ENCODE measurements at regions of chr9 and their contacts with region 1.

Region 1: GRCh38 chr9:136118320-136119060 is at the start of gene TMEM250:
- DNase-seq: peak; percentile 96
- H3K4me3 ChIP-seq: peak within 1 kb of the TSS; percentile 68 to 86 (median 84)
- H3K27ac ChIP-seq: peak within 1 kb of the TSS; percentile 73
- H3K4me1 ChIP-seq: peaks cover 28% of the 10 kb centered on the region
- H3K27me3 ChIP-seq: no peaks in the 10 kb centered on the region
- CTCF ChIP-seq: no peak
- total RNA-seq, gene TMEM250: 33.8 to 49.8 TPM

Region 2: DNA sequence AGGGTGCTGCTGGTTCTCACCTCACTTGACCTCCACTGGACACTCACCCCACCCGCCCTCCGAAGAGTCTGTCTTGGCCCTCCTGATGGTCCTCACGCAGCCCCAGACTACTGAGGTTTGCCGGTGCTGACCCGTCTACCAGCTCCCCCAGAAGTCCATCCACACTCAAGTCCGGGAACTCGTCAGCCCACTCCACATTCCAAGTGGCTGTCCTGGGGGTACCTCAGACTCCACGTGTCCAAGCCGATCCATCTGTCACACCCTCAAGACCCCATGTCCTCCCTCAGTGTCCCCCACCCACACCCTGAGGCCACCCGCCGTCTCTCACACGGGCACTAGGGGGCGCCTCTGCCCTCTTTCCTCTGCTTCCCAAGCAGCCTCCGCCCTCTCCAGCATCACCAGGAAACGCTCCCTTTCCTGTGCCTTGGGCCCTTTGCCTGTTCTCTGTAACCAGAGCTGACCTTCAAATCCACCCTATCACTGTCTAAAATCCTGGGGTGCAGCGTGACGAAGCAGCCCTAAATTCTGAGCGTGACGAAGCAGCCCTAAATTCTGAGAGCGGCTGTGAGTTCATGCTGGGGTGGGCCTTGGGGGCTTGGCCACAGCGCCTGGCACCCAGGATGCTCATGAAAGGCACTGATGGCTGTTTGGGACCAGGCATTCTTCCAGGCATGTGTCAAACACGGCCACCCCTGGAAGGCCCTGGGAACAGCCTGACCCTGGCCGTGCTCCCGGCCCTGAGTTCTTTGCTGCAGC is 320.8 kb before region 1 on chr9:
- CTCF ChIA-PET with region 1: no interaction called
- dilution Hi-C with region 1: no loop called
- in situ Hi-C with region 1: no loop called
- intact Hi-C with region 1: loop called (anchors 2 kb)
- DNase-seq: peak; percentile 29
- H3K4me3 ChIP-seq: no peak overlapping the region
- H3K27ac ChIP-seq: no peak overlapping the region
- H3K4me1 ChIP-seq: no peaks in the 10 kb centered on the region
- H3K27me3 ChIP-seq: no peaks in the 10 kb centered on the region
- CTCF ChIP-seq: peak; percentile 54 to 67

Region 3: DNA sequence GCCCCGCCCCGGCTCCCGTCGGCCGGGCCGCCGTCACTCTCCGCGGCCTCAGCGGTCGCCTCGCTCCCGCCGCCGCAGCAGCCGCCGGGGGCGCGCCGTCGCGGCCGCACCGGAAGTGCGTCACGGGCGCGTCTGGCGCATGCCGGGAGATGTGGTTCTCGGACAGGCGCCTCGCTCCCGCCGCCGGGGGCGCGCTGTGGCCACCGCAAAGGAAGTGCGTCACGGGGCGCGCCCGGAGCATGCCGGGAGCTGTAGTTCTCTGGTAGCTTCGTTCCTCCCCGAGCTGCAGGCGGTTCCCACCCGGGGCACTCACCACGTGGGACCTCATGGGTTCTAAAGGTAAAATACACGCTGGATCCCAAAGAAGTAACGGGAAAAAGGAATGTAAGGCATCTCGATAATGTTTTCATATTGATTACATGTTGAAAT is 157.2 kb before region 1 on chr9 and contains the start of gene UBAC1:
- CTCF ChIA-PET with region 1: no interaction called
- dilution Hi-C with region 1: no loop called
- in situ Hi-C with region 1: loop called (anchors 5 to 10 kb)
- intact Hi-C with region 1: no loop called
- DNase-seq: peak; percentile 91
- H3K4me3 ChIP-seq: peak within 1 kb of the TSS; percentile 60 to 92 (median 68)
- H3K27ac ChIP-seq: peak within 1 kb of the TSS; percentile 37
- H3K4me1 ChIP-seq: peaks cover 13% of the 10 kb centered on the region
- H3K27me3 ChIP-seq: no peaks in the 10 kb centered on the region
- CTCF ChIP-seq: peak in 1 of 2 donors; percentile 48
- total RNA-seq, gene UBAC1: 39.2 to 43.4 TPM

Region 4: DNA sequence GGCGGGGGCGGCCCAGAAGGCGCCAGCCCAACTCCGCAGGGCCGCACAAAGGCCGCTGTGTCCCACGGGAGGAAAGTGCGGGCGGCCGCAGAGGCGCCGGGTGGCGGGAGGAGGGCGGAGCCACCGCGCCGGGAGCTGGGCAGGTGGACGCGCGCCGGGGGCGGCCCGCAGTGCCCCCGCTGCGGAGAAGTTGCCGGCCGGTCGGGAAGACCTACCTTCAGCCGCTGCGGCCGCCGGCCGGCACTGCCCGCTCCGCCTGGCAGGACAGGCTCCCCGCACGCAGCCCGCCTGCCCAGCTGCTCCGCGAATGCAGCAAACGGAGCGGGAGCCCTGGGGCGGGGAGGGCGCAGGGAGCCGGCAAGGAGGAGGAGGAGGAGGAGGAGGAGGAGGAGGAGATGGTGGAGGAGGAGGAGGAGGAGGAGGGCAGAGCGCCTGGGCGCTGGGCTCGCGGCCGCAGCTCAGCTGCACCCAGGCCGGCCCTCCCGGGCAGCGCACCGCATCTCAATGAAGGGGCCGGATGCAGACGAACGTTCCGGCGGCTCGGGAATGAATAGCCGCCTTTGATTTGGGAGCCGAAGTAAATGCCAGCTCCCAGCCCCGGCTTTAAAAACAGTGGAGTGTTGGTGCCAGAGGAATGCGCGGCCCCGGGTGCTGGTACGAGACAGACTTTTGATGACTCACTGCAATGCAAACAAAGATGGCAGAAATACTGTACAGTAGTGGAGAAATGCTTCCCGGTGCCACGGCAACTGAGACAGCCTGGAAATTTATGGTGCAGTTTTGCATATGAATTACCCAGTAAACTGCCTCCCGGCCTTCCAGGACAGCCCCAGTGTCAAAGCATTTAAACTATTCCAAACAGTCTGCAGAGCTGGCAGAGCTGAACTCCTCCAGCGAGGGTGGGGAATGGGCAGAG is 66.7 kb before region 1 on chr9:
- CTCF ChIA-PET with region 1: no interaction called
- dilution Hi-C with region 1: loop called (anchors 5 kb)
- in situ Hi-C with region 1: no loop called
- intact Hi-C with region 1: loop called (anchors 2 kb)
- DNase-seq: peak; percentile 96
- H3K4me3 ChIP-seq: peak overlapping the region; percentile 29 to 63 (median 48)
- H3K27ac ChIP-seq: peak overlapping the region; percentile 47
- H3K4me1 ChIP-seq: peaks cover 44% of the 10 kb centered on the region
- H3K27me3 ChIP-seq: no peaks in the 10 kb centered on the region
- CTCF ChIP-seq: no peak

Region 5: DNA sequence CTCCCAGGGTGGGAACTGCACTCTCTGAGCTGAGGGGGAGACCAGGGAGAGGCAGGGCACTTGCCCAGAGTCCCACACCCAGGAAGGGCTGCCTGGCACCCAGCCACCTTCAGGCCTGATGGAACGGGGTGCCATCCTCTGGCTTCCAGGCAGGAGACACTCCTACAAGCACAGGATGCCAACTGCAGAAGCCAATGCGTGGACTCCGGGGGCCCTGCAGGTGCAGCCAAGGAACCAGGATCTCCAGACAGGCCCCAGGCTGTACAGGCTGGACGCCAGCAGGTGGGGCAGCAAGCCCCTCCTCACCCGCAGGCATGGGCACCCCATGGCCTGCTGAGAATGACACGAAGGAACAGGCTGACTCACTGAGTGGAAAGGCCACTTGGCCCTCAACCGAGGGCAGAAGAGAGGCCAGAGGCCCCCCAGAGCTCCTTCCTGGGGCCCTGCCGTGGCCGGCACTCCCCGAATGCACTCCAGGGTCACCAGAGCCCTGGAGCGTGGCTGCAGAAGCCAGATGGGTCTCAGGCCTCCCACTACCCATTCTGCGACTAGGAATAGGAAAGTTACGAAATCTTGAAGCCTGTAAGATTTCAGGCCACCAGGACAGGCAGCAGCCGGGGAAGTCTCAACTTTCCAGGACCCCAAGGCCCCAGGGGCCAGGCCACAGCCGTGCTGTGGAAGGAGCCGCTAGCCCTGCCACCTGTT is 39.1 kb before region 1 on chr9:
- CTCF ChIA-PET with region 1: no interaction called
- dilution Hi-C with region 1: no loop called
- in situ Hi-C with region 1: no loop called
- intact Hi-C with region 1: no loop called
- DNase-seq: no peak
- H3K4me3 ChIP-seq: no peak overlapping the region
- H3K27ac ChIP-seq: no peak overlapping the region
- H3K4me1 ChIP-seq: peaks cover 11% of the 10 kb centered on the region
- H3K27me3 ChIP-seq: no peaks in the 10 kb centered on the region
- CTCF ChIP-seq: no peak

Region 6: DNA sequence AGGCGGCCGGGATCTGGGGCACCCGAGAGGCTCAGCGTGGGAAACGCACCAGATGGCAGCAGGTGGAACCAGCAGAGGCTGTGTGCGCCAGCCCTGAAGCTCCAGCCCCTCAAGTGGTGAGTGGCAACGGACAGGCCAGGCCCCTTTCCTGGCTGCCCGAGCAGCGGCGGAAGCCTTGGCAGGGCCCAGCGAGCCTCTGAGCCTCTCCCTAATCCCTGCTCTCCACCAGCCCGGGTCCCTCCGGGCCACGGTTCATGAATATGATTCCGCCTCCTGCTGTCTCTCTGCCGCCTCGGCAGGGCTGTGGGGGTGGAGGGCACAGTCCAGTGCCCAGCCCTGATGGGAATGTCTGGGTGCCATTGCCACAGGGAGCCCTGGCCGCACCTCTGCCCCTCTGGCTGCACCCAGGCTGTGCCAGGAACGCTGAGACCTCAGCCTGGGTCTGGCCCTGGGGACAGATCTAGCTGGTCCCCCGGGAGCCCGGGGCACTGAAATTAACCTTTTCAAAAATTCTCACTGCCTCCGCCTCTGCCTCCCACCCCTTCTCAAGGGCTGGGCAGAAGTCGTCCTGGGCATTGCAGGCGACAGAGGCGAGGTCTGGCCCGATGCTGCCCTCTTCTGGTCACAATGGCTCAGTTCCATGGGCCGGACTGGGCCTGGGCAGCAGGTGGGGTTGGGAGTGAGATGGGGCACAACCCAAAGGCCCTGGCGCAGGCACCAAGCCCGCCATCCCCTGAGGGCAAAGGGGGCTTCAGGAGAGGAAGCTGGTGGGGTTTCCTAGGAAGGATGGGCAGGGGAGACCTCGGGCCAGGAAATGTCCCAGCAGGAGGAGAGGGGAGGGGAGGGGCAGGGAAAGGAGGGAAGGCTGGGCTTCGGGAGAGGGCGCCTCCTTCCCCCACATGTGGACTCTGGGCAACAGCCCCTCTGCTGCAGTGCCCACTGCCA is 165.1 kb after region 1 on chr9:
- CTCF ChIA-PET with region 1: no interaction called
- dilution Hi-C with region 1: no loop called
- in situ Hi-C with region 1: no loop called
- intact Hi-C with region 1: loop called (anchors 1 kb)
- DNase-seq: peak; percentile 48
- H3K4me3 ChIP-seq: peak overlapping the region in 1 of 3 experiments; percentile 9
- H3K27ac ChIP-seq: no peak overlapping the region
- H3K4me1 ChIP-seq: peaks cover 6% of the 10 kb centered on the region
- H3K27me3 ChIP-seq: no peaks in the 10 kb centered on the region
- CTCF ChIP-seq: peak; percentile 86 to 88

Region 7: DNA sequence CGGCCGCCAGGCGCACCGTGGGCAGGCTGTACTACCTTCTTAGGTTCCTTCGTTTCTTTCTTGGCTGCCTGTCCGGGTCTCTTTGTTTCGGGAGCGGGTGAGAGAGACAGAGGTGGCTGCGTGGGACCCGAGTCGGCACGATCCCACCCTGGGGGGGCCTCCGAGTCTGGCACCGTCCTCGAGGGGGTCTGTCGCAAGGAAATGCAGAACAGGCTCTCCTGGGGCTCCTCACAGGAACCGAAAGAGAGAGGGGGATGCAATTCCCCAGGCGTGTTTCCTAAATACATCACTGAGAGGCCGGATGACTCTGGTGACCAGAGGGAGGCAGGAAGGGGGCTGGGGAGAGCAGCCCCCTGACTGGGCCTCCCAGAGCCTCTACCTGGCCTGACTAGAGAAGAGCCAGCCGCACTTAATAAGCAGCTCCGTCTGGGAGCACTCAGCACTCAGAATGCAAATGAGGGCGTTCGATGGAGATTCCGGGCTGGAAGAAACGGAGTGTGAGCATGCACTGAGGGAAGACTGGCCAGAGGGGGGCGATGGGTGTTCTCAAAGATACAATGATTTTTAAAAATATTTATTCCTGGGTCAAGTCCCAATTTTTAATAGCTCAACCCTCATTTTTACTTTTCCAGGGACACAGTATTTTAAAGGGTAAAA is 332.9 kb after region 1 on chr9:
- CTCF ChIA-PET with region 1: no interaction called
- dilution Hi-C with region 1: no loop called
- in situ Hi-C with region 1: no loop called
- intact Hi-C with region 1: no loop called
- DNase-seq: no peak
- H3K4me3 ChIP-seq: no peak overlapping the region
- H3K27ac ChIP-seq: no peak overlapping the region
- H3K4me1 ChIP-seq: no peaks in the 10 kb centered on the region
- H3K27me3 ChIP-seq: no peaks in the 10 kb centered on the region
- CTCF ChIP-seq: no peak

Measured in mammary epithelial cell (primary cell).